Dendritic cell treated with granulocyte-macrophage colony-stimulating factor and Interleukin-4, amounts not matched to agents 40 ng/mL and 50 ng/mL, for 4 days (primary cell): ENCODE measurements at regions of chr1 and their contacts with region 1.

Region 1: DNA sequence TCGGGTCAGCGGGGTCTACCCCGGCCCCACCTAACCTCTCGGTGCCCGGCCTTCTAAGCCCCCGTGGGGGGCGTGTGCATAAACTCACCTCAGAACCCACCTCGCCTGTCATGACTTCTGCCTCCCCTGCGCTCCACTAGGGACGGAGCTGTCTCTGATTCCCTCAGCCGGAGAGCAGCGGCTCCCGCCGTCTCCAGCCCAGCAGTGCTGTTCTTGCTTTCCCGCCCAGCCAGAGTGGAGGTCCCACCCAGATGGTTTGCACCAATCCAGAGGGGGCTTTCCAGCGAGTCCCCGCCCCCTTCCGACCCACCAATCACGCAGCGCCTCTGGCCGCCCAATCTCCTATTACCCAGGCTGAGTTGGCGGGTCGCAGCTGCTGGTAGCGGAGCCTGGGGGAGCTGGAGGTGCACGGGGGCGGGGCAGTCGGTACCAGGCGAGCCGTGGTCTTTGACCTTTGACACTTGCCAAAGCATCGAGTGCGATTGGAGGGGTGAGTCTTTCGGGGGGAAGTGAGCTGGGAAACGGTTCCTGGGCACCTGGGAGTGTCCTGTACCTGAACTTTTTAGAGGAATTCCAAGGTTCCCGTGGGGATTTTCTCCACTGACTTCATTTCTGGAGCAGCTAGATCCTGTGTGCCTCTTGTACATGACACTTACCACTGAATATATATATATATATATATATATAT is at the start of gene CLSPN:
- H3K4me3 Mint-ChIP-seq: peak within 1 kb of the TSS; percentile 92
- H3K27ac Mint-ChIP-seq: peak within 1 kb of the TSS; percentile 80
- H3K4me1 Mint-ChIP-seq: peaks cover 5% of the 10 kb centered on the region
- H3K27me3 Mint-ChIP-seq: no peaks in the 10 kb centered on the region

Region 2: DNA sequence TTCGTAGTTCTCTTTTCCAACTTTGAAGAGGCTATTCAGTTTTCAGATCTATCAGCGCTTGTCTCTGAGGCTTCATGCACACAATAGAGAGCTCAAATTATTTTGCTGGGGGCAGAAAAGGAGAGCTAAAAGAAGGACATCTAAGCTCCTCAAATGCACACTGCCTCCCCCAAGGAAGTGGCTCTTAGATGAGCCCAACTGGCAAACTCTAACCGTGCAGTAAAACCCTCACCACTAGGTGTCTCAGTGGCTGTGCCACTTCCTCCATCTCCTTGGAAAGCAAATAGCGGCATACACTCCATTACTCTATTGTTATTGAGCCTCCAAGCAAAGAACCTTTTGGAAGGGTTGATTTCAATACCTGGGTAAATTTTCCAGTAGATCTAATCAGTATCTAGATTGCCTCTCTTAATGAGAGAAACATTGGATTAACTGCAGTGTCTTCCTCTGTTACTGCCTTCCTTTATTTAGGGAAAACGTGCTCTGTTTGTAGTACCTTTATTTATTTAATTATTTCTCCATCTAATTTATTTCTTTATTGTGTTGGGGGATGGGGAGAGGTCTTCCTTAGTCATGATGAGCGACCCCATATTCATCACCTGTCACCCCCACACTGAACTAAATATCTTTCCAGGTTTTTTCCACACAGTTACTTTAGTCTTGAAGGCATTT is 567.7 kb before region 1 on chr1:
- intact Hi-C with region 1: loop called (anchors 10 kb)
- H3K4me3 Mint-ChIP-seq: no peak overlapping the region
- H3K27ac Mint-ChIP-seq: no peak overlapping the region
- H3K4me1 Mint-ChIP-seq: no peaks in the 10 kb centered on the region
- H3K27me3 Mint-ChIP-seq: no peaks in the 10 kb centered on the region

Region 3: GRCh38 chr1:35564037-35564883 is 205.6 kb before region 1 on chr1:
- intact Hi-C with region 1: loop called (anchors 2 kb)
- H3K4me3 Mint-ChIP-seq: no peak overlapping the region
- H3K27ac Mint-ChIP-seq: no peak overlapping the region
- H3K4me1 Mint-ChIP-seq: peaks cover 40% of the 10 kb centered on the region
- H3K27me3 Mint-ChIP-seq: no peaks in the 10 kb centered on the region

Region 4: GRCh38 chr1:35715568-35716002 is 54.3 kb before region 1 on chr1:
- intact Hi-C with region 1: loop called (anchors 5 kb)
- H3K4me3 Mint-ChIP-seq: peak overlapping the region; percentile 64
- H3K27ac Mint-ChIP-seq: peak overlapping the region; percentile 43
- H3K4me1 Mint-ChIP-seq: peaks cover 49% of the 10 kb centered on the region
- H3K27me3 Mint-ChIP-seq: peaks cover 4% of the 10 kb centered on the region